Heart right ventricle (tissue), 16 donors: ENCODE measurements at regions of chr19 and their contacts with region 1.

Region 1: DNA sequence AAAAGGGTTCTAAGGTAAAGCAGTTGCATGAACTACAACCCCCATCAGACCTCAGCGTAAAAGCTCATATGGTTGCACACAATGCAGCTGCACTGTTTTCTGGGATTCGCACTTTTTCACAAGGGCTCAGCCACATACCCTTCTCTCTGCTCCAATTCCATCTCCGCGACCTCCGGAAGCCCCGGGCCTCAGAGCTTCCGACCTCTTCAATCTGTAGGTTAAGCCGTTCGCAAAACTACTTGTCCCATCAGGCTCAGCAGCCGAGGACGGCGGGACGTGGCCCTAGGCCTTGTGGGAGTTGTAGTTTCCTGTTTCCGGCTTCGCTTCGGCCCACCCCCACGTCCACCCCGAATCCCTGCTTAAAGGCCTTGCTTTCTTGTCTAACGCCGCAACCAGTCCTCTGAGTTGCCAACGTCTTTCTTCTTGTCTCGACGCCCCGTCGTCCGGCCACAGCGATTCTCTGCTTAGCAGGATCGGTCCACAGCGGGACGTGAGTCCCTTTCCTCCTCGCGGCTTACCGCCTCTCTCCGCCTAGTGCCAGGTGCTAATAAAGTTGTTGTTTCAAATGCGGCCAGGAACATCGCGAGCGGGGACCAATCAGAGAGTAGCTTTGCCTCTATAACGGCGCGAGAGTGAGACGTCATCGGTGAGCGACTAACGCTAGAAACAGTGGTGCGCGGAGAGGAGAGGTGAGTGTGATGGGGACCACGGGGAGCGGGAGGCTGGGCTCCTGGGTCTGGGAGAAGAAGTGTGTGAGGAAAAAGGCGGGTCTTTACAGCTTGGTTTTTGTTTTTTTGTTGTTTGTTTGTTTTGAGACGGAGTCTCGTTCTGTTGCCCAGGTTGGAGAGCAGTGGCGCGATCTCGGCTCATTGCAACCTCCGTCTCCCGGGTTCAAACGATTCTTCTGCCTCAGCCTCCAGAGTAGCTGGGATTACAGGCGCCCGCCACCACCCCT is at the starts of genes PRPF31 and TFPT:
- DNase-seq: peak; percentile 92 to 98
- ATAC-seq: peak; percentile 93 to 97 (median 96)
- H3K4me3 ChIP-seq: peak within 1 kb of the TSS; percentile 62 to 95 (median 74)
- H3K27ac ChIP-seq: peak within 1 kb of the TSS; percentile 83 to 96 (median 92)
- H3K4me1 ChIP-seq: peaks cover 10 to 30% (median 26%) of the 10 kb centered on the region in 9 donors
- H3K27me3 ChIP-seq: no peaks in the 10 kb centered on the region
- CTCF ChIP-seq: no peak
- total RNA-seq, gene PRPF31: 35.9 to 46.4 (median 43.0) TPM
- total RNA-seq, gene TFPT: 11.0 to 16.8 (median 12.9) TPM

Region 2: GRCh38 chr19:53867225-53868090 is 247.9 kb before region 1 on chr19 and contains the start of gene MYADM:
- intact Hi-C with region 1: loop called in 1 of 10 experiments (anchors 10 kb)
- DNase-seq: peak; percentile 99
- ATAC-seq: peak; percentile 76 to 95 (median 84)
- H3K4me3 ChIP-seq: peak within 1 kb of the TSS; percentile 59 to 97 (median 80)
- H3K27ac ChIP-seq: peak within 1 kb of the TSS; percentile 63 to 99 (median 97)
- H3K4me1 ChIP-seq: peaks cover 3 to 45% (median 39%) of the 10 kb centered on the region in 9 donors
- H3K27me3 ChIP-seq: no peaks in the 10 kb centered on the region
- CTCF ChIP-seq: no peak
- total RNA-seq, gene MYADM: 87.4 to 265 (median 135) TPM

Region 3: GRCh38 chr19:53906211-53907192 is 208.9 kb before region 1 on chr19:
- intact Hi-C with region 1: no loop called
- DNase-seq: peak; percentile 18 to 59
- ATAC-seq: peak in 7 of 8 donors; percentile 44 to 65 (median 58)
- H3K4me3 ChIP-seq: no peak overlapping the region
- H3K27ac ChIP-seq: no peak overlapping the region
- H3K4me1 ChIP-seq: peaks cover 0 to 26% (median 19%) of the 10 kb centered on the region in 9 donors
- H3K27me3 ChIP-seq: peaks cover 19 to 92% (median 69%) of the 10 kb centered on the region in 7 donors
- CTCF ChIP-seq: peak; percentile 51 to 93 (median 81)

Region 4: GRCh38 chr19:54137086-54137921 is 21.9 kb after region 1 on chr19 and contains the start of gene CNOT3:
- intact Hi-C with region 1: loop called in 2 of 10 experiments (anchors 1 to 2 kb)
- DNase-seq: peak; percentile 99 to 100
- ATAC-seq: peak; percentile 90 to 95 (median 94)
- H3K4me3 ChIP-seq: peak within 1 kb of the TSS; percentile 86 to 100 (median 99)
- H3K27ac ChIP-seq: peak within 1 kb of the TSS; percentile 86 to 99 (median 98)
- H3K4me1 ChIP-seq: peaks cover 16 to 51% (median 39%) of the 10 kb centered on the region in 9 donors
- H3K27me3 ChIP-seq: peaks cover 0 to 6% (median 0%) of the 10 kb centered on the region in 7 donors
- CTCF ChIP-seq: no peak
- total RNA-seq, gene CNOT3: 16.0 to 25.9 (median 20.9) TPM